Transverse colon (tissue), 4 donors: ENCODE measurements at regions of chr14 and their contacts with region 1.

Region 1: DNA sequence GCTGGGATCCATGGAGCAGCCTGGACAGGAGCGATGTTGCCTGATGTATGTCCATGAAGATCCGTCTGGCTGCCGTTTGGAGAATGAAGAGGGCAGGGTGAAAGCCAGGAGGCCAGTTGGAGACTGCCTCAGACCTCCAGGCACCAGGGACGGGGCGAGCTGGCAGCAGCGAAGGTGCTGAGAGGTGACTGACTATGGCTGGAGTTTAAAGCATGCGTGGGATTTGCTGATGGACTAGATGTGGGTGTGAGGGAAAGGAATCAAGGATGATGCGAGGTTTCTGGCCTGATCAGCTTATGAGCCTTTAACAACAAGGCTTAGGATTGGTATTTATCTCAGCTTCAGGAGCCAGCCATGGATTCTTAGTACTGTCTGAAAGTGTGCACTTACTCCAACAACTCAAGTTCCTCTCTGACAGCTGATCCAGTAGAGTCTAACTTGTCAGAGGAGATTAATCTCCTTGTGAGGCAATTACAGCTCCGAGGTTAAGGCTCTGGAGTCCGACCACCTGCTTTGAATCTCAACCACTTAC is 49.4 kb downstream of the DYNC1H1 start:
- DNase-seq: no peak
- H3K4me3 ChIP-seq: no peak overlapping the region
- H3K27ac ChIP-seq: no peak overlapping the region
- H3K4me1 ChIP-seq: no peaks in the 10 kb centered on the region
- H3K27me3 ChIP-seq: no peaks in the 10 kb centered on the region
- CTCF ChIP-seq: no peak
- EP300 ChIP-seq: no peak
- POLR2A ChIP-seq: no peak

Region 2: GRCh38 chr14:102055216-102055918 is 41.6 kb after region 1 on chr14:
- in situ Hi-C with region 1: no loop called
- intact Hi-C with region 1: loop called (anchors 1 kb)
- DNase-seq: no peak
- H3K4me3 ChIP-seq: no peak overlapping the region
- H3K27ac ChIP-seq: no peak overlapping the region
- H3K4me1 ChIP-seq: no peaks in the 10 kb centered on the region
- H3K27me3 ChIP-seq: no peaks in the 10 kb centered on the region
- CTCF ChIP-seq: no peak
- EP300 ChIP-seq: no peak
- POLR2A ChIP-seq: no peak

Region 3: GRCh38 chr14:102071283-102071998 is 57.7 kb after region 1 on chr14:
- in situ Hi-C with region 1: no loop called
- intact Hi-C with region 1: no loop called
- DNase-seq: no peak
- H3K4me3 ChIP-seq: no peak overlapping the region
- H3K27ac ChIP-seq: no peak overlapping the region
- H3K4me1 ChIP-seq: no peaks in the 10 kb centered on the region
- H3K27me3 ChIP-seq: no peaks in the 10 kb centered on the region
- CTCF ChIP-seq: no peak
- EP300 ChIP-seq: no peak
- POLR2A ChIP-seq: no peak